MCF 10A (cell line): ENCODE measurements at regions of chr10 and their contacts with region 1.

Region 1: GRCh38 chr10:36779234-36779846 is 346.1 kb upstream of the ANKRD30A start:
- DNase-seq: peak; percentile 62
- H3K4me3 Mint-ChIP-seq: no peak overlapping the region
- H3K27ac Mint-ChIP-seq: peak overlapping the region; percentile 31
- H3K4me1 Mint-ChIP-seq: no peaks in the 10 kb centered on the region
- H3K27me3 Mint-ChIP-seq: no peaks in the 10 kb centered on the region
- CTCF ChIP-seq: peak; percentile 82

Region 2: GRCh38 chr10:35126530-35127296 is 1652.6 kb before region 1 on chr10 and contains the start of gene CREM:
- CTCF ChIA-PET with region 1: no interaction called
- POLR2A ChIA-PET with region 1: no interaction called
- intact Hi-C with region 1: loop called (anchors 10 kb)
- DNase-seq: peak; percentile 98
- H3K4me3 Mint-ChIP-seq: peak within 1 kb of the TSS; percentile 82
- H3K27ac Mint-ChIP-seq: peak within 1 kb of the TSS; percentile 97
- H3K4me1 Mint-ChIP-seq: peaks cover 6% of the 10 kb centered on the region
- H3K27me3 Mint-ChIP-seq: no peaks in the 10 kb centered on the region
- CTCF ChIP-seq: peak; percentile 86
- total RNA-seq, gene CREM: 30.2 and 31.3 TPM in 2 replicates

Region 3: DNA sequence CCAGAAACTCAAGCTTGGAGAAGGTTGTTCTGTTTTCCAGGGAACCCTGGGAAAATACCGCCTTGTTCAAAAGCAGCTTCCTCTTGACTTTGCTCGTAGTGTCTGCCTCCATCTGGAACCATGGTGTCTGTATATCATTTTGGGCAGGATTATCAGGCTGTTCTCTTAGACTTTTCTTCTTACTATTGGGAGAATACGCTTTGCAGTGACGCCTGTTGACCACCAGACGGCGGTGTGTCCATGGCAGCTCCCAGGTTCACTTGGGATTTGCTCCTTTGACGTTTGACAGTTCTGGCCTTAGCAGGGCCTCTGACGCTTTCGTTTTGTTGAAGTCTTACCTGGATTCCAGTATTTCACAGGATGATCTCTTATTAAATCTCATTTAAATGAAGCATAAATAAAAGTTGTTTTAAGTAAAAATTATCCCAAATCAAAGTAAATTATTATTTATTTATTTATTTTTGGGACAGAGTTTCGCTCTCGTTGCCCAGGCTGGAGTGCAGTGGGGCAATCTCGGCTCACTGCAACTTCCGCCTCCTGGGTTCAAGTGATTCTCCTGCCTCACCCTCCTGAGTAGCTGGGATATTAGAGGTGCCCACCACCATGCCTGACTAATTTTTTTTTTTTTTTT is 1216.0 kb before region 1 on chr10:
- CTCF ChIA-PET with region 1: interaction called, 11 read pairs
- POLR2A ChIA-PET with region 1: no interaction called
- intact Hi-C with region 1: no loop called
- DNase-seq: peak; percentile 79
- H3K4me3 Mint-ChIP-seq: no peak overlapping the region
- H3K27ac Mint-ChIP-seq: no peak overlapping the region
- H3K4me1 Mint-ChIP-seq: no peaks in the 10 kb centered on the region
- H3K27me3 Mint-ChIP-seq: no peaks in the 10 kb centered on the region
- CTCF ChIP-seq: peak; percentile 97

Region 4: DNA sequence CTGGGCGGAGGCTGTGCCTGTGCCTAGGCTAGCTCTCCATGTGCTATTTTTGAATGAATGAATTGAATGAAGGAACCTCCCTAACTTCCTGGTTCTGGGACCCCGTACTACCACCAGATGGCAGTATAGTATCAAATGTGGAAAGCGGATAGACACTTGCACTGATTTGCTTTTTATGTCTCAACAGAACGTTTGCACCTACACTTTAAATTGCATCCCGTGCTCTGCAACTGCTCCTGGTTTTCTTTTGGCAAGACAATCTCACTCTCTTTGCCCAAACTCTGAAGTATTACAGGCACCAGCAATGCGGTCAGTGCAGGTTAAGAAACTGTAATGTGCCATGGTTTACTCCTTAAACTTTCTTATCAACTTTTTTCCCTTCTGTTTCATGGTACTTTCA is 1143.8 kb before region 1 on chr10:
- CTCF ChIA-PET with region 1: interaction called, 94 read pairs
- POLR2A ChIA-PET with region 1: interaction called, 6 read pairs
- intact Hi-C with region 1: loop called (anchors 1 kb)
- DNase-seq: peak; percentile 79
- H3K4me3 Mint-ChIP-seq: no peak overlapping the region
- H3K27ac Mint-ChIP-seq: no peak overlapping the region
- H3K4me1 Mint-ChIP-seq: peaks cover 23% of the 10 kb centered on the region
- H3K27me3 Mint-ChIP-seq: no peaks in the 10 kb centered on the region
- CTCF ChIP-seq: peak; percentile 87

Region 5: GRCh38 chr10:35781643-35782035 is 997.7 kb before region 1 on chr10:
- CTCF ChIA-PET with region 1: no interaction called
- POLR2A ChIA-PET with region 1: no interaction called
- intact Hi-C with region 1: loop called (anchors 5 kb)
- DNase-seq: peak; percentile 30
- H3K4me3 Mint-ChIP-seq: no peak overlapping the region
- H3K27ac Mint-ChIP-seq: peak overlapping the region; percentile 93
- H3K4me1 Mint-ChIP-seq: peaks cover 34% of the 10 kb centered on the region
- H3K27me3 Mint-ChIP-seq: no peaks in the 10 kb centered on the region
- CTCF ChIP-seq: no peak

Region 6: GRCh38 chr10:36765782-36766414 is 13.4 kb before region 1 on chr10:
- CTCF ChIA-PET with region 1: interaction called, 14 read pairs
- POLR2A ChIA-PET with region 1: interaction called, 3 read pairs
- intact Hi-C with region 1: no loop called
- DNase-seq: peak; percentile 3
- H3K4me3 Mint-ChIP-seq: no peak overlapping the region
- H3K27ac Mint-ChIP-seq: no peak overlapping the region
- H3K4me1 Mint-ChIP-seq: no peaks in the 10 kb centered on the region
- H3K27me3 Mint-ChIP-seq: no peaks in the 10 kb centered on the region
- CTCF ChIP-seq: no peak